ENCODE measurements at regions of chr19 and their contacts with region 1.

Region 1: DNA sequence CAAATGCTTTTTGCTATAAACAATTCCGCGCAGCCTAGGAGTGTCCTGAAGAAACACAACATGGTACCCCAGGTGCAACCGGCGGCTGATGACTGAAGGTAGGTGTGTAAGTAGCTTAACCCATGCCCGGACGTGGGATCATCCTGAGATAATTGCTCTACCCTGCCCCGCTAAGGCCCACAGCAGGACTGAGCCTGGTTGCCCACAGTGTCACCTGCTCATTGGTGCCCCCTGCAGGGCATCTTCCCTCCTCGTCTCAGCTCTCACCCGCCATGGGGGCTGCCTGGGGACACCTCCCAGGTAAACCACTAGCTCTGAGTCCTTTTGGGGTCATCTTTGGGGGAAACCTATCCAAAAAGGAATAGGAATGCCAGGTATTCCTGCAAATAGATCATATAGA is 22.3 kb downstream of the TMEM161A start:
- DNase-seq: peak; percentile 88
- ATAC-seq: no peak
- H3K4me3 Mint-ChIP-seq: no peak overlapping the region
- H3K27ac Mint-ChIP-seq: no peak overlapping the region
- H3K4me1 Mint-ChIP-seq: peaks cover 13% of the 10 kb centered on the region
- H3K27me3 Mint-ChIP-seq: peaks cover 20% of the 10 kb centered on the region
- CTCF ChIP-seq: peak; percentile 57

Region 2: GRCh38 chr19:19061506-19061905 is 54.4 kb before region 1 on chr19:
- CTCF ChIA-PET with region 1: interaction called, 17 read pairs
- POLR2A ChIA-PET with region 1: no interaction called
- DNase-seq: no peak
- ATAC-seq: no peak
- H3K4me3 Mint-ChIP-seq: no peak overlapping the region
- H3K27ac Mint-ChIP-seq: no peak overlapping the region
- H3K4me1 Mint-ChIP-seq: peaks cover 19% of the 10 kb centered on the region
- H3K27me3 Mint-ChIP-seq: peaks cover 41% of the 10 kb centered on the region
- CTCF ChIP-seq: no peak

Region 3: GRCh38 chr19:19087676-19088075 is 28.3 kb before region 1 on chr19:
- CTCF ChIA-PET with region 1: interaction called, 11 read pairs
- POLR2A ChIA-PET with region 1: no interaction called
- DNase-seq: no peak
- ATAC-seq: no peak
- H3K4me3 Mint-ChIP-seq: no peak overlapping the region
- H3K27ac Mint-ChIP-seq: peak overlapping the region; percentile 3; the same call in 1 of the 2 replicates
- H3K4me1 Mint-ChIP-seq: peaks cover 21% of the 10 kb centered on the region
- H3K27me3 Mint-ChIP-seq: peaks cover 28% of the 10 kb centered on the region
- CTCF ChIP-seq: no peak

Region 4: GRCh38 chr19:19105365-19106055 is 10.4 kb before region 1 on chr19:
- CTCF ChIA-PET with region 1: interaction called, 13 read pairs
- POLR2A ChIA-PET with region 1: interaction called, 6 read pairs
- DNase-seq: peak; percentile 89
- ATAC-seq: peak; percentile 85
- H3K4me3 Mint-ChIP-seq: peak overlapping the region; percentile 83
- H3K27ac Mint-ChIP-seq: peak overlapping the region; percentile 95
- H3K4me1 Mint-ChIP-seq: peaks cover 20% of the 10 kb centered on the region
- H3K27me3 Mint-ChIP-seq: peaks cover 19% of the 10 kb centered on the region
- CTCF ChIP-seq: no peak

Region 5: DNA sequence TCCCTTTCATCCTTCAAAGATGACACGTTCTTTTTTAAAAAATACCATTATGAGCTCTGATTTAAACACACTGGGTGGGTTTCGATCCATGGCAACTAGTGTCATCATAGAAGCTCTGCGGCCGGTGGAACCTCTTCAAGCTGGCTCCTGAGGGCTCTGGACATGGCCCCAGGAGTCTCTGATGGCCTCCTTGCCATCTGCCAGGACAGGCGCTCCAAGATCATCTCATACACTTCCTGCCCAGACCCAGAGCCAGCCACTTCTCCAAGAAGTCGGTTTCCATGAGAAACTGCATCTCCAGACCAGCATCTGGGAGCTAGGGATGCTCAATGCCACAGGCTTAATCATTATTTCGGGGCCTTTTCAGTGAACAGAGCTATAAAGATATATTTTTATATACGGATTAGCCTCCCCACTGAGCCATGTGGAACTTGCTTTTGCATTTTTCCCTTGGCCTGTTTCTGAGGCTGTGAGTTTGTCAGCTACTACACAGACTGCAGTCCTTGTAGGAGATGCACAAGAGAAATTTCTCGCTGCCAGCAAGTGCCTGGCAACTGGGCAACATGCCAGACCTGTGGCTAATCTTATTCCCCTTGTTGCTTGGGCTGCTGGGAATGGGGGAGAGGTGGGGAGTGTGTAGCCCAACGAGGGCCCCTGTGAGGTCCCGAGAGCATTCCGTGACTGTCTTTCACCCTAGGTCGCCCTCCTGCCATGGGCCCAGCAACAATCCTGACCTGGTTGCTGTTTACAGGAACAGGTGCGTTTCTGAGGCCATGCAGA is 188.4 kb after region 1 on chr19:
- CTCF ChIA-PET with region 1: no interaction called
- POLR2A ChIA-PET with region 1: no interaction called
- DNase-seq: no peak
- ATAC-seq: no peak
- H3K4me3 Mint-ChIP-seq: no peak overlapping the region
- H3K27ac Mint-ChIP-seq: no peak overlapping the region
- H3K4me1 Mint-ChIP-seq: no peaks in the 10 kb centered on the region
- H3K27me3 Mint-ChIP-seq: no peaks in the 10 kb centered on the region
- CTCF ChIP-seq: no peak

Measured in WTC11 (cell line).